Prostate gland (tissue), 2 donors: ENCODE measurements at regions of chr1 and their contacts with region 1.

Region 1: GRCh38 chr1:169933984-169934725 is 40.5 kb upstream of the SCYL3 start:
- DNase-seq: no peak
- H3K4me3 ChIP-seq: no peak overlapping the region
- H3K27ac ChIP-seq: no peak overlapping the region
- H3K4me1 ChIP-seq: no peaks in the 10 kb centered on the region
- H3K27me3 ChIP-seq: no peaks in the 10 kb centered on the region
- CTCF ChIP-seq: no peak
- POLR2A ChIP-seq: no peak

Region 2: DNA sequence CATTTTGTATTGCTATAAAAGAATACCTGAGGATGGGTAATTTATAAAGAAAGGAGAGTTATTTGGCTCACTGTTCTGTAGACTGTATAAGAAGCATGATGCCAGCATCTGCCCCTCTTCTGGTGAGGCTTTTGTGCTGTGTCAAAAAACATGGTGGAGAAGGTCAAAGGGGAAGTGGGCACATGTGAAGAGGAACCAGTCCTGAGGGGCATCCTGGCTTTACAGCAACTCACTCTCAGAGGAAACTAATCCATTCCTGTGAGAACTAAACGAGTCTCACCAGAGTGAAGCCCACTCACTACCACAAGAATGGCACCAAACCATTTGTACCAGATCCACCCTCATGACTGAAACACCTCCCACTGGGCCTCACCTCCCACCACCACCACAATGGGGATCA is 285.4 kb before region 1 on chr1:
- intact Hi-C with region 1: no loop called
- DNase-seq: no peak
- H3K4me3 ChIP-seq: no peak overlapping the region
- H3K27ac ChIP-seq: no peak overlapping the region
- H3K4me1 ChIP-seq: no peaks in the 10 kb centered on the region
- H3K27me3 ChIP-seq: no peaks in the 10 kb centered on the region
- CTCF ChIP-seq: no peak
- POLR2A ChIP-seq: no peak

Region 3: DNA sequence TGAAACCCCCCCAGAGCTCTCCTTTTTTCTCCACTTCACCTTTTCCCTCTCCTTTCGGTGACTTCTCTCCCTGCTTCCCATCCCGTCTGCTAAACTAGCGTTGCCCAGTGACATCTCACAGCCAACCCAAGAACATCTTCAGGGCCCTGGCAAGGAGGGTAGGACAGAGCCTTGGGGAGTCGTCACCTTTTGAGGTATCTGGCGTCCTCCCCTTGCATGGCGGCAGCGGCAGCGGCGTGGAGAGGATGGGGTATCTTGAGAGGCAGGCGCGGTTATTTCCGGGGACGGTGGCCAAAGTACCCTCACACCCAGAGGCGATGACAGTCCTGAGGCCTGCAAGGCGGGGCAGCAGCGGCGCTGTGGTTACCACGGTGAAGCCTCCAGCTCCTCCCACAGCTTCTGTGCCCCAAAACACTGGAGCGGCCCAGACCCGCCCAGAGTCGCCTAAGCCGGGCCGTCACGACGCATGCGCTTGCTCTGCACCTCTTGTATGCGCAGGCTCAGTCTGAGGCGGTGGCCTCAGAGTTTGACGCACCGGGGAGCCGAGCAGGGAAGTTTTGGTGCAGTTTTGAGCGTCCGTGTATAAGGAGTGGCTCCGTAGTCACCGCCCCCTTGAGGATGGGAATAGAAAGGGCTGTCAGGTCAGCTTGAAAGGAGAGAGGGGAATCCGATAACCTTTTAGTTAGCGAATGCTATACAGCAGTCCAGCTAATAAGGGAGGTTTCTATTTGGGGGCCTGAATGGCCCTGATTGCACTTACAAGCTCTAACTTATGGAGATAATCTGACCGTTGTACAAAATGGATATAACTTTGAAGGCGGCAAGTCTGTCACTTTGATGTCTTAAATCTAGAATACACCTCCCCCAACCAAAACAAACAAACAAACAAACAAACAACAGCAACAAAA is 140.3 kb after region 1 on chr1 and contains the start of gene KIFAP3:
- intact Hi-C with region 1: loop called (anchors 10 kb)
- DNase-seq: peak; percentile 95
- H3K4me3 ChIP-seq: peak within 1 kb of the TSS; percentile 49 to 63
- H3K27ac ChIP-seq: peak within 1 kb of the TSS; percentile 70 to 79
- H3K4me1 ChIP-seq: no peaks in the 10 kb centered on the region
- H3K27me3 ChIP-seq: no peaks in the 10 kb centered on the region
- CTCF ChIP-seq: peak in 3 of 4 experiments; percentile 23 to 78 (median 61)
- POLR2A ChIP-seq: peak; percentile 70
- total RNA-seq, gene KIFAP3: 17.1 to 37.3 TPM

Region 4: DNA sequence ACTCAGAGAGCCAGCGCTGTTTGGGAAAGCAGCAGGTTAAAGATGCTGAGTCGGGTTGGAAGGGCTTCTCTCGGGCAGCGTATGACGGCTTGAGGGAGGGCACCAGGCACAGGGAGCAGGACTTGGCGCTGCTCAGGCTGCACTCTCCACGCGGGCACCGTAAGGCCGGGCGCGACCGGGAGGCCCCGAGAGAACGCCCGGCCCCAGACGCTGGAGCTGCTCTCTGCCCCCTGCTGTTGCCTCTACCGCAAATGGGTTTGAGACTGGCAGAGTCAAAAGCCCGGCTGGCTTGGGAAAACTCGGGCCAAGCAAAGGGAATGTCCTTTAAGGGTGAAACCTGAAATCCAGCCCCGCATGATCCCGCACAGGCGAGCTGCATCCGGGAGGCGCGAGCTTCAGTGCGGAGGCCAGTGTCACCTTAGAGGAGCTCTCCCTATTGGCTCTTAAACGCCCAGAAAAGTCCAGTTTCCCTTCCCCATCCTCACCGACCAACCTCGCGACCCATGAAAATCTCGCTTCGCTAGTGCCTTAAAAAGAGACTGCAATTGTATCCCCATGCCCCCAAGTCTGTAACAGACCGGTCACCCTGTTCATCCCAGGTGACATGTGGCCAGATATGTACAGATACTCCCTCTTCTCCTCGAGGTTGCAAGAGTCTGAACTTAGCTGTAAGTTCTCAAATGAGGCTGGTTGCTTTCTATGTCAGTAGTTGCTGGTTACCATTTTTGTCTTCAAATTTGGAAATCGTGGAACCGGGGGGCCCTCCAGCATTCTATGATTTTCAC is 730.9 kb after region 1 on chr1:
- intact Hi-C with region 1: loop called (anchors 5 kb)
- DNase-seq: no peak
- H3K4me3 ChIP-seq: peak overlapping the region; percentile 45 to 56
- H3K27ac ChIP-seq: peak overlapping the region; percentile 82 to 83
- H3K4me1 ChIP-seq: no peaks in the 10 kb centered on the region
- H3K27me3 ChIP-seq: no peaks in the 10 kb centered on the region
- CTCF ChIP-seq: no peak
- POLR2A ChIP-seq: no peak

Region 5: DNA sequence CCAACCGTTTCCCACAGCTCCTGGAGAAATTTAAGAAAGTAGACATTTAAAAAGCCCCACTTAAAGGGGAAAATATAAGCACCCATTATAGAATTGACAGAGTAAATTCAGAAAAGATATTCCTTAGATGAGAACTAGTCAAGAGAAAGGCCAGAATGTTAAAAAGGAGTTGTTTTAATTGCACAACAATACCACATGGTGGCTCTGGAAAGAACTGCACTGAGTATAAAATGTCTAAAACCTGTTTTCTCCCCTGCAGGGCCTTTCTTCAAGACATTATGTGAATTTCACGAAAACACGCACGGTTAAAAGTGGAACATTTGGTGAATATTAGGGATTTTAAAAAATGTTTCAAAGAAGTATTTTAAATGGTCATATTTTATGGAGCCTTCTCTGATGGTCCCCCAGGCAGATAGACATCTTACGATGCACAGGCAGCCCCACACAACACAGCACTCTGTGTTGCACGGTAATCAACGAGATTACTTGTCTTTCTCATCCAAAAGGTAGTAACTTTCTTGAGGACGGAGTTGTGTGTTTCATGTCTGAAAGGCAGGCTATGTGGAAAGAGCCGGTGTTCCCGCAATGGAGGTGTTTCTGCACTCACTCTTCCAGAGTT is 831.7 kb after region 1 on chr1:
- intact Hi-C with region 1: loop called (anchors 5 kb)
- DNase-seq: no peak
- H3K4me3 ChIP-seq: no peak overlapping the region
- H3K27ac ChIP-seq: no peak overlapping the region
- H3K4me1 ChIP-seq: no peaks in the 10 kb centered on the region
- H3K27me3 ChIP-seq: no peaks in the 10 kb centered on the region
- CTCF ChIP-seq: peak in 3 of 4 experiments; percentile 9 to 52 (median 46)
- POLR2A ChIP-seq: no peak